OCI-LY7 (cell line): ENCODE measurements at regions of chr5 and their contacts with region 1.

Region 1: DNA sequence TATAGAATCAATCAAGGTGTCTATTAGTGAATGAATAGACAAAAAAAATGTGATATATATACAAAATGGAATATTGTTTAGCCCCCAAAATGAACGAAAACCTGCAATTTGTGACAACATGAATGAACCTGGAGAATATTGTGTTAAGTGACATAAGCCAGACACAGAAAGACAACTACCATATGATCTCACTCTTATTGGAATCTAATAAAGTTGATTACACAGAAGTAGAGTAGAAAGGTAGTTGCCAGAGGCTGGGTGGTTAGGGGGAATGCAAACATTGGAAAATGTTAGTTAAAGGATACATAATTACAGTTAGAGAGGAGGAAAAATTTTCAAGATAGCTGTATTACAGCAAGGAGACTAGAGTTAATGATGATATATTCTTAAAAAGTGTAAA is 1962.3 kb downstream of the EFNA5 start:
- DNase-seq: no peak
- H3K4me3 ChIP-seq: no peak overlapping the region
- H3K27ac ChIP-seq: no peak overlapping the region
- H3K4me1 ChIP-seq: no peaks in the 10 kb centered on the region
- CTCF ChIP-seq: no peak

Region 2: DNA sequence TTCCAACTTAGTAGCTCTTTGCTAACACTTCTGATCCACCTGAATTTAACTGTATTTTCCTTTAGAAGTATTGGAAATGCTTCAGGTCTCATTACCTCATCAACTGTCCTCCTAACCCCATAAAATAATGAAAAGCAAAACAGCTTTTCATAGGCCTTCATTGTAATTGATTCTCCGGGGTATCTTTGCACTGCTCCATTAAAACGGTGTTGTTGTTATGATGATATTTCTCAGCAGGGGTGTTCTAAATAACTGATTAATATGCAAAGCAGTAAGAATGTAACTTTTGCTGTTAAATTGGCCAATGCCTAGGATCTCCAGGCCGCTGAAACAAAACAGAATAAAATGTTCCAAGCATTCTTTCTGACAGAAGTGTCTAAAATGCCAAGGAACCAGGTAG is 20.9 kb before region 1 on chr5:
- CTCF ChIA-PET with region 1: no interaction called
- POLR2A ChIA-PET with region 1: interaction called, 3 read pairs
- intact Hi-C with region 1: loop called (anchors 1 kb)
- DNase-seq: no peak
- H3K4me3 ChIP-seq: no peak overlapping the region
- H3K27ac ChIP-seq: no peak overlapping the region
- H3K4me1 ChIP-seq: no peaks in the 10 kb centered on the region
- CTCF ChIP-seq: no peak

Region 3: DNA sequence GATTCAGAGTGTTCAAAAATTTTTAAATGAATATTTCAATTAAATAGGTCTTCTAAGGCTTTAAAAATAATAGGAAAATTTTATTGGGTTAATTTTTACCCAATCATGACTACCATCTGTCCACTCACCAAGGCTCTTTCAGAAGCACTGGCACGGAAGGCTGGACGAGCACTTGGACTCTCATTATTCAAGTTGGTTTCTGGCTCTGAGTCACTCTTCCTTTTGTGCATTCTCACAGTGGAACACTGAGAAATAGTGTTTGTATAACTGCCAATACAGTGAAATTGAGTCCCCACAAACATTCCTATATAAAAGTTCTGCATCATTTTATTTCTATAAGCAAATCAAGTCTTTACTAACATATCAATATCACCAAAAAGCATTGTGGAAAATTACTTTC is 813.3 kb after region 1 on chr5:
- CTCF ChIA-PET with region 1: no interaction called
- POLR2A ChIA-PET with region 1: no interaction called
- intact Hi-C with region 1: no loop called
- DNase-seq: no peak
- H3K4me3 ChIP-seq: no peak overlapping the region
- H3K27ac ChIP-seq: no peak overlapping the region
- H3K4me1 ChIP-seq: no peaks in the 10 kb centered on the region
- CTCF ChIP-seq: no peak